Common myeloid progenitor, CD34-positive (primary cell): ENCODE measurements at regions of chr15 and their contacts with region 1.

Region 1: GRCh38 chr15:29103824-29104565 is 165.6 kb downstream of the NSMCE3 start:
- DNase-seq: peak; percentile 76 to 83 (median 82)
- H3K4me3 ChIP-seq: peak overlapping the region in 4 of 7 experiments; percentile 36 to 70 (median 53)
- H3K27ac ChIP-seq: no peak overlapping the region
- H3K4me1 ChIP-seq: peaks cover 0 to 12% (median 5%) of the 10 kb centered on the region in 4 experiments
- H3K27me3 ChIP-seq: peaks cover 0 to 4% (median 0%) of the 10 kb centered on the region in 5 experiments

Region 2: GRCh38 chr15:29115093-29115991 is 11.3 kb after region 1 on chr15:
- CTCF ChIA-PET with region 1: interaction called, 21 read pairs
- POLR2A ChIA-PET with region 1: no interaction called
- DNase-seq: peak in 2 of 3 donors; percentile 52 to 59
- H3K4me3 ChIP-seq: peak overlapping the region in 6 of 7 experiments; percentile 25 to 82 (median 65)
- H3K27ac ChIP-seq: no peak overlapping the region
- H3K4me1 ChIP-seq: peaks cover 0 to 13% (median 11%) of the 10 kb centered on the region in 4 experiments
- H3K27me3 ChIP-seq: peaks cover 0 to 7% (median 0%) of the 10 kb centered on the region in 5 experiments

Region 3: DNA sequence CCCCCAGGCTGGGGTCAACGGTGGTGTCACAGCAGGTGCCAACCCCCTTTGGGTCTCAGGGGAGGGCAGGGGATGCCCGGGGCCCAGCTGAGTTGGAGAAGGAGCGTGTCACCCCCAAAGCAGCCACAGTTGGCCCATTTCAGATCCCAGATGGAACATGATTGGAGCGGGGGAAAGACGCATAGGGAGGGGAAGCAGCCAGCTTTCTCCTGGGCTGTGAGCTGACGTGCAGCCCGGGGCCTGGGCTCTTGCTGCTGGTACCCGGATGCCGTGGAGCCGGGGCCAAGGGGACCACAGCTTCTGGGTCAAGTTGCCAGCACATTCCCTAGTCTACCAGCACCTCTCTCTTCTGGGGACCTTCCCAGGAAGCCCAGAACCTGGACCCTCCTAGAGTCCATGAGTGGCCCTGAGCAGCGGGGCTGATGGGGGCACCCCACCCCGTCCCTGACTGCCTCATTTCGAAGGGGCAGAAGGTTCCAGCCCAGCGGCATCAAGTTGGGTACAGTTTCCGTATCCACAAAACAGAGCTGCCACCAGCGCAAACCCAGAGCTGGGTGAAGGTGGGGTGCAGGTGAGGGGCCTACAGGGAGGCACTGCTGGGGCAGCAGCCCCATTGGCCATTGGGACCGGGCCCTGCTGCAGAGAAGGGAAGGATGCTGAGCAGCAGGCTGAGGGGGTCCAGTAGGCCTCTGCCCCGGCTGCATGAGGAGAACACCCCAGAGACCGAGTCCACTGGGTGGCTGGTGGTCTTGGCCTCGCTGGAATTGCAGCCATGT is 16.8 kb after region 1 on chr15:
- CTCF ChIA-PET with region 1: interaction called, 21 read pairs
- POLR2A ChIA-PET with region 1: no interaction called
- DNase-seq: no peak
- H3K4me3 ChIP-seq: no peak overlapping the region
- H3K27ac ChIP-seq: no peak overlapping the region
- H3K4me1 ChIP-seq: peaks cover 0 to 2% (median 1%) of the 10 kb centered on the region in 4 experiments
- H3K27me3 ChIP-seq: no peaks in the 10 kb centered on the region